ENCODE measurements at regions of chr3 and their contacts with region 1.

Region 1: GRCh38 chr3:149224736-149225594 is 3.3 kb upstream of the CP start:
- DNase-seq: peak; percentile 89
- H3K4me3 ChIP-seq: peak overlapping the region; percentile 18 to 77 (median 55)
- H3K27ac ChIP-seq: peak overlapping the region; percentile 96
- H3K4me1 ChIP-seq: peaks cover 18% of the 10 kb centered on the region
- H3K27me3 ChIP-seq: no peaks in the 10 kb centered on the region
- CTCF ChIP-seq: no peak
- POLR2A ChIP-seq: no peak

Region 2: GRCh38 chr3:149180057-149180573 is 44.9 kb before region 1 on chr3:
- CTCF ChIA-PET with region 1: no interaction called
- POLR2A ChIA-PET with region 1: no interaction called
- dilution Hi-C with region 1: no loop called
- intact Hi-C with region 1: loop called (anchors 1 kb)
- DNase-seq: peak; percentile 95
- H3K4me3 ChIP-seq: no peak overlapping the region
- H3K27ac ChIP-seq: peak overlapping the region; percentile 52
- H3K4me1 ChIP-seq: peaks cover 20% of the 10 kb centered on the region
- H3K27me3 ChIP-seq: no peaks in the 10 kb centered on the region
- CTCF ChIP-seq: no peak
- POLR2A ChIP-seq: no peak

Region 3: DNA sequence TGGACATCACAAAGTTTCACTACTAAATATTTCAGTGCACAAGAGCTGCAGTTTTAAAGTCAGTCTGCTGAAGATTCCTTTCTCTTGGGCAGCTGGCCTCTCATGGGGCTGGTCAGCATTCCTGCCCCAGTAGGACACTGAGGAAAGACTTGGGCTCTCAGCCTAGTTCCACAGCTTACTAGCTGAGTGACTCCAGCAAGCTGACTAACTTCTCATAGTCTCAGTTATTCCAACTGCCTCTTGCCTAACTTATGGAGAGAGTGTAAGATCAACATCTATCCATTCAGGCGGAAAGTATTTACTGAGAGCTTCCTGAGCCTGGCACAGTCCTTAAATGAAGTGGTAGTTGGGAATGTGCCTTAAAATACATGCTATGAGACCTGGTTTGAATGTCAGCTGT is 276.6 kb after region 1 on chr3:
- CTCF ChIA-PET with region 1: no interaction called
- POLR2A ChIA-PET with region 1: no interaction called
- dilution Hi-C with region 1: no loop called
- intact Hi-C with region 1: no loop called
- DNase-seq: peak; percentile 61
- H3K4me3 ChIP-seq: no peak overlapping the region
- H3K27ac ChIP-seq: no peak overlapping the region
- H3K4me1 ChIP-seq: peaks cover 15% of the 10 kb centered on the region
- H3K27me3 ChIP-seq: no peaks in the 10 kb centered on the region
- CTCF ChIP-seq: no peak
- POLR2A ChIP-seq: no peak

Measured in endothelial cell of umbilical vein (primary cell).